Esophagus muscularis mucosa (tissue), 4 donors: ENCODE measurements at regions of chr1 and their contacts with region 1.

Region 1: DNA sequence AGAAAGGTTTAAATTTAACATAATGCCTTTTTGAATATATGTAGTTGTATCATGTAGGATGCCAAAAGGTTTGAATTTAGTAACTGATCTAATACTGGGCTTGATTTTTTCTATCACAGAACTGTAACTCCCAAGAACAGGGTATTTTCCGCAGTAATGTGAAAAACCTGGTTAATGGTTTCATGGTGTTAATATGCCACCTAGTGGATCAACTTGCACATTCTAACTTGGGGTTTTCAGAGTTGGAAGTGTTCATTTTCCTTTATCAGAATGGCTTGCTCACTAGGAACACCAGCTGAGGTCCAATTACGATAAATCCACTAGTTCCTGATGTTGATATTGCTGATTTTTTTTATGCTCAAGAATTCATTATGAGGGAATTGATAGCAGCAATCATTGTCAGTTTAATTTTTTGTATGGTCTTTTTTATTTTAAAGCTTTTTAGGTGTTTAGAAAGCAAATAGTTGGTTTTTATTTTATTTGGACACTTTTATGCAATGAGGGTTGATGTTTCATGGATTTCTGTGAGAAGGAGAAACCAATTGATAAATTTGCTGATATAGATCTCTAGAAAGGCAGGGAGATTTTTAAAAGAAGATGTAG is 157.2 kb downstream of the PLA2G4A start:
- DNase-seq: no peak
- H3K4me3 ChIP-seq: no peak overlapping the region
- H3K27ac ChIP-seq: no peak overlapping the region
- H3K4me1 ChIP-seq: no peaks in the 10 kb centered on the region
- H3K27me3 ChIP-seq: no peaks in the 10 kb centered on the region
- CTCF ChIP-seq: peak; percentile 68 to 75 (median 71)
- EP300 ChIP-seq: no peak
- POLR2A ChIP-seq: no peak

Region 2: DNA sequence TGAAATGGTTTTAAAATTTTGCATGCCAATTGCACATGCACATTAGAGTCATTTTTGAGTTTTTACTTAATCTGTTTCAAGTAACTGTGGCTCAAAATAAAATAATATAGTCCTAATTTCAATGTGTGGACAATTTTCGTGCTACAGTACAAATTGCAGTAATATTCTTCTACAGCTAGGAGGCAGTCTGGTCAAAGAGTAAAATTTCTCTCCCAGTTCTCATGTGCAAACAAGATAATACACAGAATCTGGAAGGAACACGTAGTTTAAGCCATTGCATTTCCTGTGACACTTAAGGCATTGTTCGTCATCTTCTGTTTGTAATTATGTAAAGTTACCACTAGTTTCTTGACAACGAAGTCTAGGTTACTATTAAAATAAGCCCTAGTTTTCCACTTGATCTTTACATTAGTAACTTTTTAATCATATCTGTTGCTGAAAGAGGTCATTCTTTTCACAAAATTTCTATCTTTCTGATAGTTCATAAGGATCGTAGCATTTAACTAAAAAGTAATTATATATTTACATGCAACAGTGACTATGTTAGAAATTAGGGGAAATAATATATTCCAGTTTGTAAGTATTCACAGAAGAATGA is 581.4 kb before region 1 on chr1:
- intact Hi-C with region 1: loop called (anchors 10 kb)
- DNase-seq: no peak
- H3K4me3 ChIP-seq: no peak overlapping the region
- H3K27ac ChIP-seq: no peak overlapping the region
- H3K4me1 ChIP-seq: peaks cover 0 to 5% (median 0%) of the 10 kb centered on the region in 4 donors
- H3K27me3 ChIP-seq: no peaks in the 10 kb centered on the region
- CTCF ChIP-seq: peak; percentile 55 to 73 (median 63)
- EP300 ChIP-seq: no peak
- POLR2A ChIP-seq: no peak

Region 3: DNA sequence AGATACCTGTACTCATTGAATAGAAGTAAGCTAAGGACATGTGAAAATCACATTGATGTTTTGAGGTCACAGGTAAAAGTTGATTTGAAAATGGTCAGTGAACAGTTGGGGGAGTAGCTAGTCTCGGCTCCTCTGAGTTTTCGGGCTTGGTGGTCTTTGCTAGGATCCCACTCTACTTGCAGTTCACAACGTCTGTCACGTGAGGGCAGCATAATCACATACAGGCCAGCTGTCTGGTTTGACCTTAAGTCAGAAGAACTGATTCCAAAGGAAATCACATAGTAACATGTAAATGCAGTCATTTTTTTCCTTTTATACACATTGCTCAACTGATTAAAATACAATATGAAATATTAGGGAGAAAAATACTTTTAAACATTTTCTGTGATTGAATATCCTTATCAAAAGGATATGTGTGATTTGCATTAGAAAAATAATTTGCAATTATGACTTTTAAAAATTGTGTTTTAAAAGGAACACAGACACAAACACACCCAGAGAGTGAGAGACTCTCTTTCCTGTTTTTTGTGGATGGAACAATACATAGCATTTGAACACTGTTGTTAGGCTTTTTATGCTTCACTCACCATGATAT is 503.2 kb before region 1 on chr1:
- intact Hi-C with region 1: loop called (anchors 5 kb)
- DNase-seq: no peak
- H3K4me3 ChIP-seq: no peak overlapping the region
- H3K27ac ChIP-seq: no peak overlapping the region
- H3K4me1 ChIP-seq: peaks cover 0 to 6% (median 0%) of the 10 kb centered on the region in 4 donors
- H3K27me3 ChIP-seq: no peaks in the 10 kb centered on the region
- CTCF ChIP-seq: peak; percentile 65 to 80 (median 73)
- EP300 ChIP-seq: no peak
- POLR2A ChIP-seq: no peak

Region 4: DNA sequence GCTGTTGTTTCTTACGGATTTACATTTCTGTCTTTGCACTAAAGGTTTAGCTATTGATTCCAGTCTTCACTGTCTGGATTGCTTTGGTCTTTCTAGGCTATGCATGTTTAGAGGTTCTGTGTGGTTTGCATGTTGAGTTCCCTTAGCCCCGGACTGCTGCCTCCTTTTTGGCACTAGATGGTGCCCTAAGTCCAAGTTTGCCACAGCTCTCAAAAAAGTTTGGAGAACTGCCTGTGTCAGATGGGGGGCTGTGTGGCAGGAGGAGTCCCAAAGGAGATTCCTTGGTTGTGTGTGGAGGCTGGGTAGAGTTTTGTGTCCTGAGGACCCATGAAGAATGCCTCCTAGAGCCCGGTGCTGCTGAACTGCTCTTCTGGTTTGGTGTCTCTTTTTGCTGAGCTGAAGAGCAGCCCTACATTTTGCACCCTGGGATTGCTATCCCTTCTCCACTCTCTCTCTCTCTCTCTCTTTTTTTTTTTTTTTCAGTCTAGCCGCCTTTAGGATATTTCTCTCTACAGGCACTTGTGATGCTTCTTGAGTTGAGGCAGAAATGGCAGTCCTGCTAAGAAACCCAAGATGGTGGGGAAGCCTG is 380.1 kb before region 1 on chr1:
- intact Hi-C with region 1: loop called (anchors 2 kb)
- DNase-seq: no peak
- H3K4me3 ChIP-seq: no peak overlapping the region
- H3K27ac ChIP-seq: no peak overlapping the region
- H3K4me1 ChIP-seq: peaks cover 0 to 4% (median 0%) of the 10 kb centered on the region in 4 donors
- H3K27me3 ChIP-seq: no peaks in the 10 kb centered on the region
- CTCF ChIP-seq: peak; percentile 52 to 69 (median 68)
- EP300 ChIP-seq: no peak
- POLR2A ChIP-seq: no peak

Region 5: DNA sequence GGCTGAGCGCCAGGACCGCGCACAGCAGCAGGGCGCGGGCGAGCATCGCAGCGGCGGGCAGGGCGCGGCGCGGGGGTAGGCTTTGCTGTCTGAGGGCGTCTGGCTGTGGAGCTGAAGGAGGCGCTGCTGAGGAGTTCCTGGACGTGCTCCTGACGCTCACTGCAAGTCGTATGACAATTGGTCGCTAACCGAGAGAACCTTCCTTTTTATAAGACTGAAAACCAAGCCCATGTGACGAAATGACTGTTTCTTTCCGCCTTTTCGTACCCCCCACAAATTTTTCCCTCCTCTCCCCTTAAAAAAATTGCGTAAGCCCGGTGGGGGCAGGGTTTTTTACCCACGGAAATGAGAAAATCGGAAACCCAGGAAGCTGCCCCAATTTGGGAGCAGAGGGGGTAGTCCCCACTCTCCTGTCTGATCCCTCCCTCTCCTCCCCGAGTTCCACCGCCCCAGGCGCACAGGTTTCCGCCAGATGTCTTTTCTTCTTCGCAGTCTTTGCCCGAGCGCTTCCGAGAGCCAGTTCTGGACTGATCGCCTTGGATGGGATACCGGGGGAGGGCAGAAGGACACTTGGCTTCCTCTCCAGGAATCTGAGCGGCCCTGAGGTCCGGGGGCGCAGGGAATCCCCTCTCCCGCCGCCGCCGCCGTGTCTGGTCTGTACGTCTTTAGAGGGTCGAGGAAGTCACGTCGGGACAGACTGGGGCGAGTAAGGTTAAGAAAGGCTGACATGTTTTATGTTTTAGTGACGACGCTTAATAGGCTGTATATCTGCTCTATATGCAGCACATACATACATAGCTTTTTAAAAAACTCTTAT is 305.5 kb before region 1 on chr1 and contains the start of gene PTGS2:
- intact Hi-C with region 1: loop called (anchors 10 kb)
- DNase-seq: peak; percentile 95
- H3K4me3 ChIP-seq: peak within 1 kb of the TSS; percentile 65 to 83 (median 74)
- H3K27ac ChIP-seq: peak within 1 kb of the TSS; percentile 89 to 94 (median 92)
- H3K4me1 ChIP-seq: peaks cover 0 to 25% (median 22%) of the 10 kb centered on the region in 4 donors
- H3K27me3 ChIP-seq: no peaks in the 10 kb centered on the region
- CTCF ChIP-seq: peak; percentile 46 to 56 (median 48)
- EP300 ChIP-seq: no peak
- POLR2A ChIP-seq: peak; percentile 31
- total RNA-seq, gene PTGS2: 2.7 to 18.6 (median 4.3) TPM

Region 6: DNA sequence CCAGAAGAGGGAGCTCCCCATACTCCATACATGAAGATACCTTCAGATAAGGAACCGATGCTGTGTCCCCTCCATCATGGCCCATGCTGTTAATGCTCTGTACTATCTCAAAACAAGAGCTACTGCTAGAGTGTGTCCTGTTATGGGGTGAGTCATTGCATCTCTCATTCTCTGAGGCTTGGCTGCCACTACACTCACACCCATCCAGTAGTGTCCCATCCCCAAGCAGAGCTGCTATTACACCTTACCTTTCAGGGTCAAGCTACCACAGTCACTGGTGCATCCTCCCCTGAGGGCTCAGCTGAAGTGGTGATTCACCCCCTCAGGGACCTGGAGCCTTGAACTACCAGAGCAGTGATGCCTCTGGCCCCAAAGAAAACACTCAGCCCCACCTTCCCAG is 41.3 kb after region 1 on chr1:
- intact Hi-C with region 1: no loop called
- DNase-seq: no peak
- H3K4me3 ChIP-seq: no peak overlapping the region
- H3K27ac ChIP-seq: no peak overlapping the region
- H3K4me1 ChIP-seq: no peaks in the 10 kb centered on the region
- H3K27me3 ChIP-seq: no peaks in the 10 kb centered on the region
- CTCF ChIP-seq: no peak
- EP300 ChIP-seq: no peak
- POLR2A ChIP-seq: no peak